Left cardiac atrium (tissue), 4 donors: ENCODE measurements at regions of chr5 and their contacts with region 1.

Region 1: GRCh38 chr5:98905857-98906690 is 22.7 kb downstream of the CHD1 start:
- DNase-seq: no peak
- ATAC-seq: peak in 1 of 2 donors; percentile 47

Region 2: GRCh38 chr5:98827161-98827560 is 78.9 kb before region 1 on chr5:
- intact Hi-C with region 1: no loop called
- DNase-seq: no peak
- ATAC-seq: no peak

Region 3: DNA sequence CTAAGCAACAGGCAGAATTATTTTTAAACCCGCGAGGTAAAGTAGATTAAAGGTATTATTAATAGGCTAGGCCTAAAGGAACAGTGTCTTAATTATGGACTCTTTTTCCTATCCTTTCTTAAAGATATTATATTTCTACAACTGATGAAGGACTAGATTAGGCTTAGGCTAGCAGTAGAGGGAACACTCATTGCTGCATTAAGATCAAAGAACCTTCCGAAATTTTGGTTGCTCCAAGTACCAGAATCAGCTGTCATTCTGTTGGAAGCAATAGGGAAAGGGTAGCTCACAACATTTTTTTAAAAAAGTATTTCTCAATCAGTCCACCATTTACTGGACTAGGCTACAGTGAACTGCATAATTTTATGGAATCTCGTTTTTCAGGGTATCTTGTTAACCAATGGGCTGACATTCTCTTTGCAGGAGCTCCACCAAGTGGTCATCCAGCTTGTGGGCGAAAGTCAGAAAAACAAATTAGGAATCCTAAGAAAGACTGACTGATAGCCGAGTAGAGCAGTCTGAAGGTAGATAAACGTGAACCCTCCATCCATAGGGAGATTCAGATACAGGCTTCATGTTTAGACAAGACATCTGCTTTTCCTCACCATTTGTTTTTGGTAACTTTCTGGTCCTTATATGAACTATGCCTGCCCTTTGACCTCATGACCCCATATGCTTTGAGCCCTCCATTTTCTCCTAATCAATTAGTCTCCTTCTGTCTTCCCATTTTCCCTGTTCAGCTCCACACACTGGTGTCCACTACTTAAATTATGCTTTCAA is 126.3 kb after region 1 on chr5:
- intact Hi-C with region 1: loop called (anchors 1 to 5 kb)
- DNase-seq: peak; percentile 52
- ATAC-seq: peak; percentile 90 to 93

Region 4: GRCh38 chr5:99315413-99316183 is 409.5 kb after region 1 on chr5:
- intact Hi-C with region 1: no loop called
- DNase-seq: no peak
- ATAC-seq: peak in 1 of 2 donors; percentile 16